IMR-90 (cell line): ENCODE measurements at regions of chr2 and their contacts with region 1.

Region 1: GRCh38 chr2:223065107-223065506 is 13.1 kb downstream of the KCNE4 start:
- DNase-seq: no peak
- ATAC-seq: no peak
- H3K4me3 ChIP-seq: no peak overlapping the region
- H3K27ac ChIP-seq: no peak overlapping the region
- H3K4me1 ChIP-seq: peaks cover 5% of the 10 kb centered on the region
- H3K27me3 ChIP-seq: no peaks in the 10 kb centered on the region
- CTCF ChIP-seq: no peak
- POLR2A ChIP-seq: no peak
- RAD21 ChIP-seq: no peak

Region 2: GRCh38 chr2:223113161-223113560 is 48.1 kb after region 1 on chr2:
- CTCF ChIA-PET with region 1: no interaction called
- POLR2A ChIA-PET with region 1: no interaction called
- dilution Hi-C with region 1: no loop called
- in situ Hi-C with region 1: no loop called
- intact Hi-C with region 1: loop called (anchors 1 kb)
- DNase-seq: peak; percentile 12
- ATAC-seq: no peak
- H3K4me3 ChIP-seq: no peak overlapping the region
- H3K27ac ChIP-seq: no peak overlapping the region
- H3K4me1 ChIP-seq: no peaks in the 10 kb centered on the region
- H3K27me3 ChIP-seq: no peaks in the 10 kb centered on the region; the same call in 1 of the 2 replicates
- CTCF ChIP-seq: no peak
- POLR2A ChIP-seq: no peak
- RAD21 ChIP-seq: no peak